Activated CD4-positive, alpha-beta T cell treated with anti-CD3 and anti-CD28 coated beads for 36 hours (primary cell): ENCODE measurements at regions of chr12 and their contacts with region 1.

Region 1: GRCh38 chr12:68158432-68158831 is 1.1 kb downstream of the IFNG start:
- DNase-seq: no peak
- ATAC-seq: no peak
- H3K4me3 Mint-ChIP-seq: peak overlapping the region; percentile 67
- H3K27ac Mint-ChIP-seq: no peak overlapping the region
- H3K4me1 Mint-ChIP-seq: peaks cover 20% of the 10 kb centered on the region
- H3K27me3 Mint-ChIP-seq: peaks cover under 1% of the 10 kb centered on the region

Region 2: GRCh38 chr12:68001486-68002466 is 156.7 kb before region 1 on chr12:
- CTCF ChIA-PET with region 1: interaction called, 4 read pairs
- POLR2A ChIA-PET with region 1: no interaction called
- intact Hi-C with region 1: loop called in 1 of 2 experiments (anchors 2 kb)
- DNase-seq: no peak
- ATAC-seq: no peak
- H3K4me3 Mint-ChIP-seq: no peak overlapping the region
- H3K27ac Mint-ChIP-seq: no peak overlapping the region
- H3K4me1 Mint-ChIP-seq: peaks cover 7% of the 10 kb centered on the region
- H3K27me3 Mint-ChIP-seq: no peaks in the 10 kb centered on the region

Region 3: DNA sequence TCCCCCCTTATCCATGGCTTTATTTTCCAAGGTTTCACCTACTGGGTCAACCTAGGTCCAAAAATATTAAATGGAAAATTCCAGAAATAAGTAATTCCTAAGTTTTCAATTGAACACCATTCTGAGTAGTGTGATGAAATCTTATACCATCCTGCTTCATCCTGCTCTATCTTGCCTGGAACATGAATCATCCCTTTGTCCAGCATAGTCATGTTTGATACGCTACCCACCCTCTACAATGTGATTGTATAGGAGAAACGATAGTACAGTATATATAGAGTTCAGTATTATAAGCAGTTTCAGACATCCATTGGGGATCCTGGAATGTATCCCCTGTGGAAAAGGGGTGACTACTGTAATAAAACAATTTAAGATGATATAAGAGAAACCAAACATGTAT is 61.0 kb before region 1 on chr12:
- CTCF ChIA-PET with region 1: interaction called, 14 read pairs
- POLR2A ChIA-PET with region 1: no interaction called
- intact Hi-C with region 1: no loop called
- DNase-seq: no peak
- ATAC-seq: no peak
- H3K4me3 Mint-ChIP-seq: no peak overlapping the region
- H3K27ac Mint-ChIP-seq: no peak overlapping the region
- H3K4me1 Mint-ChIP-seq: no peaks in the 10 kb centered on the region
- H3K27me3 Mint-ChIP-seq: no peaks in the 10 kb centered on the region

Region 4: DNA sequence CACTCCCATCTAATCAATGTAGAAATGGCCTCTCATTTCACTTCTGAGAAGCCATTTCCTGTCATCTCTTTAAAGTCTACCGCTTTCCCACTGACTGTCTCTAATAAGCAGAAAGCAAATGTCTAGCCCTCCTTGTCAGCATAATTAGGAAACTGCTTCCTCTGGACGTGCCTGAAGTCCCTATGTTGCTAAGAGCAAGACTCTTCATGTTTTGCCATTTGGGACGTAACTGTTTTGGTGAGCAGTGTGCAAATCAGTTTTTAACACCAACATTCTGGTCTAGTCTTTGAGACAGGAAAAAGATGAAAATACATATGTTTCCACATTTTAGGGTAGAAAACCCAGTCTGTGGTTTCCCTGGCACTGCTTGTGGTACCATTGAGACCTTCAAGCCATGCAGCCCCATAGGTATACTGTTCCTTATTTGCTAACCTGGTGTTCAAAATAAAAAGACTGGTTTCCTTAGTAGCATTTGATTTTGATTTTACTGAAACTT is 21.0 kb before region 1 on chr12:
- CTCF ChIA-PET with region 1: interaction called, 39 read pairs
- POLR2A ChIA-PET with region 1: no interaction called
- intact Hi-C with region 1: no loop called
- DNase-seq: no peak
- ATAC-seq: peak; percentile 67
- H3K4me3 Mint-ChIP-seq: peak overlapping the region; percentile 13
- H3K27ac Mint-ChIP-seq: peak overlapping the region; percentile 74
- H3K4me1 Mint-ChIP-seq: peaks cover 48% of the 10 kb centered on the region
- H3K27me3 Mint-ChIP-seq: no peaks in the 10 kb centered on the region